Left ventricle myocardium superior (tissue), 1 donor: ENCODE measurements at regions of chr5 and their contacts with region 1.

Region 1: DNA sequence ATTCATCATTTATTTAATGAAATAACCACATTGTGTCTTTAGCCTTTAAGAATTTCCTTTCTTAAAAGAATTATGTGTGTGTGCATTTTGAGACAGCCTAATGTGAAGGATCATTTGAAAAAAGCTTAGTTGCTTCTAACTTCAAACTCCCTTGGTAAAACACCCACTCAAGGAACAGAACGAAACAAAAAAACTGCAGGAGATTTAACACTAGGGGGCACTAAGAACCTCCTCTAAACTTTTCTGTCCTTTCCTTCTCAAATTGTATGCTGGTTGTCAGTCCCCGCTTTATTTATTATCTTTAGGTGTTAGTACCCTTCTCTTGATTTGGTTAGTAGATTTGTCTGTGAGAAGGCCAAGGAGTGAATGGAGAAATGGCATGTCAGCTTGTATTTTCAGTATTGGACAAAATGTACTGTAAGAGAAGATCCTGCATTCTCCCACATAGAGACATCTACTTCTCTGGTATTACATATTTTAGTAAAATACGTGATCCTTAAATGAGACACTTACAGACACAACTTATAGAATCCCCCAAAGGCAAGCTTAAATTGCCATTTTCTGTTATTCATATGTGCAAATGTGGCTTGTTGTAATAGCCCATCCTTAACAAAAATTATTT is 229.7 kb downstream of the MRPS30 start:
- DNase-seq: no peak
- ATAC-seq: peak; percentile 38

Region 2: GRCh38 chr5:45205403-45205961 is 167.0 kb after region 1 on chr5:
- intact Hi-C with region 1: no loop called
- DNase-seq: no peak
- ATAC-seq: no peak

Region 3: GRCh38 chr5:45521067-45521466 is 482.6 kb after region 1 on chr5:
- intact Hi-C with region 1: loop called (anchors 5 kb)
- DNase-seq: no peak
- ATAC-seq: peak; percentile 53